ENCODE measurements at regions of chr10 and their contacts with region 1.

Region 1: DNA sequence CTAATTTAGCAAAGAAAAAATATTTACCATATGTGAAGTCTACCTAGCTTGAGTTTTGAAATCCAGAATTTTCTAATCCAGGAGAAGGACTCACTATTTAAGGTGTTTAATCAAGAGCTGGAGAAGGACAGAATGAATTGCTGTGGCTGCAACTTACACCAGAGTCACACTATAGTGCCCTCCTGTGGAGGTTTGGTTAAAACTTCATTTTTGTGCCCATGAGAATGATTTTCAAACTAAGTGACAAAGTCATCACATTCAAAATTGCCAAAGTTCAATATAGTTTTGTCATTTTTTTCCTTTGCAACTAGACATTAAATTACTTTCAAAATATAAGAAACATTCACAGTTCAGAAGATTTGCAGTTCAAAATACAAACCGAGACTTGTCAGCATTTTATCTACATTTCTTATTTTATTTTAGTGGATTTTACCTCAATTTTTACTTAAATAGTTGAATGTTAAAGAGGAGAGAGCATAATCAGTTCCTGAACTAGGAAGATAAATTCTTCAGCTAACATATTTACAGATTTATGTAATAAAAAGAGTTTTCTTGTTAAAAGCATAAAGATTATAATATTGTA is 70.7 kb downstream of the CABCOCO1 start:
- DNase-seq: peak; percentile 64
- ATAC-seq: peak; percentile 54; the same call in 1 of the 2 replicates
- H3K4me3 ChIP-seq: no peak overlapping the region
- H3K27ac ChIP-seq: no peak overlapping the region
- H3K4me1 ChIP-seq: no peaks in the 10 kb centered on the region
- H3K27me3 ChIP-seq: no peaks in the 10 kb centered on the region
- CTCF ChIP-seq: peak; percentile 72
- POLR2A ChIP-seq: 0 out of 2 replicates have a peak, but pooled peaks have one; percentile 22
- RAD21 ChIP-seq: peak; percentile 79

Region 2: GRCh38 chr10:60951272-60951724 is 782.2 kb before region 1 on chr10:
- CTCF ChIA-PET with region 1: no interaction called
- POLR2A ChIA-PET with region 1: no interaction called
- dilution Hi-C with region 1: no loop called
- in situ Hi-C with region 1: no loop called
- intact Hi-C with region 1: no loop called
- DNase-seq: peak; percentile 61
- ATAC-seq: peak; percentile 26
- H3K4me3 ChIP-seq: no peak overlapping the region
- H3K27ac ChIP-seq: 0 out of 2 replicates have a peak overlapping the region, but pooled peaks have one; percentile 0
- H3K4me1 ChIP-seq: peaks cover 5% of the 10 kb centered on the region
- H3K27me3 ChIP-seq: no peaks in the 10 kb centered on the region
- CTCF ChIP-seq: no peak
- POLR2A ChIP-seq: no peak
- RAD21 ChIP-seq: no peak

Region 3: DNA sequence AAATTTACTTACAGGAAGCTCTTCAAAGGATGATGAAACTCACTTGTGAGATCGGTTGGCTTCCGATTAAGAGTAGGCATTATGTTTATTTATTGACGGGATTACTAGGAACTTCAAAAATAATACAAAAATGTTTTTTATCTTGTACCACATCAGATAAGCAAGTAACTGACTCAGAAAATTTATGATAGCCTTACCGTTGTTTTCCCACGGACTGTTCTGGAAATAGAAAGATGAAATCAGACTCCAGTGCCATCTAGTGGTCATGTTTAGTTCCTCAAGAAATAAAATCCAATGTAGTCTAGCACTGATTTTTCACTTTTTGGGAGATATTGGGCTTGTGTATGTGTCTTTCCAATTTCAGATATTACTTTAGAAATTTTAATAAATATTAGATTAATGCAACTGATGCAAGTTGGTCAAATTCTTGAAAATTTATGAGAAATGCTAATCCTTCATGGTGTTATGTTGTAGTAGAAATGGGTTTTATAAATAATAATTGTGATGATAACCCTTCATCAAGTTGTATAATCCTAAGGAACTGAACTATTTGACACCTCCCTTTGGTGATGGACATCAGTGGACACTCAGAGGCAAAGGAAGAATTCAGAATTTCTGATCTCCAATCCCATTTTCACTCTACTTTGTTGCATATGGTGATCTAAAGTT is 449.1 kb before region 1 on chr10:
- CTCF ChIA-PET with region 1: interaction called, 3 read pairs
- POLR2A ChIA-PET with region 1: no interaction called
- dilution Hi-C with region 1: no loop called
- in situ Hi-C with region 1: loop called (anchors 10 kb)
- intact Hi-C with region 1: loop called (anchors 1 kb)
- DNase-seq: peak; percentile 77
- ATAC-seq: peak; percentile 62
- H3K4me3 ChIP-seq: no peak overlapping the region
- H3K27ac ChIP-seq: no peak overlapping the region
- H3K4me1 ChIP-seq: no peaks in the 10 kb centered on the region
- H3K27me3 ChIP-seq: no peaks in the 10 kb centered on the region
- CTCF ChIP-seq: peak; percentile 78
- POLR2A ChIP-seq: no peak
- RAD21 ChIP-seq: peak; percentile 72

Region 4: DNA sequence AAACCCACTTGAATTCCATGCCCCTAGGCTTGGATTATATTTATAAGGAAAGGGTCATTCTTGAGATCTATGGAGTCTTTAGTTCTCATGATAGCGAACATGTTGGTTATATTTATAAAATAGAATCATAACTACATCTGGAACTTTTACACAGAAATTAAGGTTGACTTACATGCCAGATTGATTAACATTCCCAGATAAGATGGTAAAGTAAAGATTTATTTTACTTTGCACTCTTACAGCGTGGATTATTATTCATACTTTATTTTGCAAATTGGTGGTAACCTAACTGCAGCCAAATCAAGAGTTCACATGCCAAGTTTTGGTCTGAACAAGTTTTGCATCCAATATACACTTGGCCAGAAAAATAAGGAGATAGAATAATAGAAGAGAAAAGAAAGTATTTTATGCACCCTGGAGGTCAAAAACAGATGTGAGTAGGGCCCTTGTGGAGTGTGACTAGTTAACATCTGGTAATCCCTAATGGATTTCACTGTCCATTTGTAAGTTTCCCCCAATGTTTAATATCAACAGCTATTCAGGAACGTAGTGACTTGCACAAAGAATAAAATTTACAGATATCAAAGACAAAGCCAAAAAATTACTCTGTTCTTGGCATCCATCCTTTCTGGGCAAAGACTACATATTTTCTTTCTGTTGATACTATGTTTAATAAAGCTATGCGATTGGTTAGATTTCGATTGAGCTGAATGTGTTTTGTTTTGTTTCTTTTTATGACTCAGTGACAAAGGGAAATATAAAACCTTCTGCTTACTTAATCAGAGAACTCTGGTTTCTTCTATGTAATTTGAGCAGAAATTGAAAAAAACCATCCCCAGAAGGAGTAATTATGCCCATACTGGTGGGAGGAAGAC is 270.2 kb before region 1 on chr10:
- CTCF ChIA-PET with region 1: no interaction called
- POLR2A ChIA-PET with region 1: no interaction called
- dilution Hi-C with region 1: no loop called
- in situ Hi-C with region 1: no loop called
- intact Hi-C with region 1: loop called (anchors 5 kb)
- DNase-seq: peak; percentile 85
- ATAC-seq: peak; percentile 76
- H3K4me3 ChIP-seq: no peak overlapping the region
- H3K27ac ChIP-seq: no peak overlapping the region
- H3K4me1 ChIP-seq: peaks cover 10% of the 10 kb centered on the region
- H3K27me3 ChIP-seq: no peaks in the 10 kb centered on the region
- CTCF ChIP-seq: no peak
- POLR2A ChIP-seq: no peak
- RAD21 ChIP-seq: no peak

Measured in IMR-90 (cell line).